Activated CD4-positive, alpha-beta T cell treated with anti-CD3 and anti-CD28 coated beads for 36 hours (primary cell): ENCODE measurements at regions of chr20 and their contacts with region 1.

Region 1: DNA sequence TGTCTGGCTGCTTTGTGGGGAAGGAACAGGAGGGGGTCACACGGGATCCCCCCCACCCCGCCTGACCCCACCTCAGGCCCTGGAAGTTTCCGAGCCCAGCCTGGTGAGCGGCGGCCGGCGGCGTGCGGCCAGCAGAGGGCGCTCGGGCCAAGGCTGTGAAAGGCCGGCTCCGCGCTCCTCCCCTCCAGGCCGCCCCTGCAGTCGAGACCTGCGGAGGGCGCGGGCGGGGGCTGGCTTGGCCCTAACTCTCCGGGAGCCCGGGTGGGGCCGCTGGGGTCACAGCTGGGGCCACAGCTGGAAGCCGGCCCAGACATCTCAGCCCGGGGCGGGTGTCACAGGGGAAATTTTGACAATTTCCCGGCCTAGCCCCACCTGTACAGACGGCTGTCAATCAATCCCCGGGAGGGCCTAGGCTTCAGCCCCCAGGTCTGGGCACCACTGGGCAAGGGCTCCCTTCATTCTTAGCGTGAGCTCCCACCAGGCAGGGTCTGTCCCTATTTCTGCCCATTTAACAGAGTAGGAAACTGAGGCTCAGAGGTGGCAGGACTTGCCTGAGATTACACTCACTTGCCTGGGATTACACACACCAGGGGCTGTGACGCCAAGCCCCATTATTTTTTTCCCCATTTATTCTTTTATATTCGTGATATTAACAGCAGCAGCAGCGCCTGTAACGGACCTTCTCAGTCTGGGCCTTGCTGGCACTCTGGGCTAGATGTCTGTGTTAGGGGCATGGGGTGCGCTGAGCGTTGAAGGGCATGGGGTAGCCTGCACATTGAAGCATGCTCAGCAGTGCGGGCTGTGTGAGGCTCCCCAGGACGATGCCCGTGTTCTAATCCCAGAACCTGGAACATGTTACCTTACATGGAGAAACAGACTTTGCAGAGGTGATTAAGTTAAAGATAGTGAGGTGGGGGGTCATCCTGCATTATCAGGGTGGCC is 23.0 kb downstream of the ZBP1 start:
- DNase-seq: peak; percentile 84
- ATAC-seq: peak; percentile 70
- H3K4me3 Mint-ChIP-seq: no peak overlapping the region
- H3K27ac Mint-ChIP-seq: no peak overlapping the region
- H3K4me1 Mint-ChIP-seq: peaks cover 2% of the 10 kb centered on the region
- H3K27me3 Mint-ChIP-seq: peaks cover 3% of the 10 kb centered on the region

Region 2: DNA sequence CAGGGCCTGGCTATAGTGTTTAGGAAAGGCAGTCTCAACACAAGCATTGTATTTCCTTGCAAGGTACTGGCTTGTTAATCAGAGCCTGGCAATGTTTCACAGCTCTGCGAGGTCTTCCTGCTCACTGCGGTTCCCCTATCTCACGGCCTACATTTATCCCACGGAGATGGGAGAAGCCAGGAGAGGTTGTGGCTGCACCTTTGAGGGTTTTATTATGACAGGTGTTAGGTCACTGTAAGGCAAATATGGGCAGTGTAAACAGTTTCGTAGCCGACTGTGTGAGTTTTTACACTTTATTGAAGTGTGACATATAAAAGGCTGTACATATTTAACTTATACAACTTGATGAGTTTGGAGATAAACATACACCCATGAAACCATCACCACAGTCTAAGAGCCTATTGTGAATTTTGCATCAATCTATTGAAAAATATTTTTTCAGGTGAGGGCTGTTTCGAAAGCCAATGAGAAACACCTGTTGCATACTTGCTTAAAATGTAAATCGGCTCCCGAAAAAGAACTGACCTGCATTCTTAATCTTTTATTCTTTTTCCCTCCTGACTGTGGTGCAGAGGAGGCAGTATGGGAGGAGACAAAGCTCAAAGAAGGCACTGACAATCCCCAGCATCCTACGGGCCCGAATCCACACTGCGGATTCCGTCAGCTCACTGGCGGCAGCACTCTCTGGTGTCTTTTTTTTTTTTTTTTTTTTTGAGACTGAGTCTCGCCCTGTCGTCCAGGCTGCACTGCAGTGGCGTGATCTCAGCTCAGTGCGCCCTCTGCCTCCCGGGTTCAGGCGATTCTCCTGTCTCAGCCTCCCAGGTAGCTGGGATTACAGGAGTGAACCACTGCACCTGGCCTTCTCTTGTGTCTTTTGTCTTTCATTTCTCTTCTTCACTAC is 213.6 kb before region 1 on chr20:
- CTCF ChIA-PET with region 1: interaction called, 6 read pairs
- POLR2A ChIA-PET with region 1: no interaction called
- intact Hi-C with region 1: loop called (anchors 1 to 2 kb)
- DNase-seq: no peak
- ATAC-seq: no peak
- H3K4me3 Mint-ChIP-seq: no peak overlapping the region
- H3K27ac Mint-ChIP-seq: no peak overlapping the region
- H3K4me1 Mint-ChIP-seq: peaks cover 21% of the 10 kb centered on the region
- H3K27me3 Mint-ChIP-seq: no peaks in the 10 kb centered on the region

Region 3: GRCh38 chr20:57514273-57514751 is 83.0 kb before region 1 on chr20:
- CTCF ChIA-PET with region 1: interaction called, 4 read pairs
- POLR2A ChIA-PET with region 1: no interaction called
- intact Hi-C with region 1: loop called (anchors 1 kb)
- DNase-seq: peak; percentile 56
- ATAC-seq: no peak
- H3K4me3 Mint-ChIP-seq: no peak overlapping the region
- H3K27ac Mint-ChIP-seq: no peak overlapping the region
- H3K4me1 Mint-ChIP-seq: no peaks in the 10 kb centered on the region
- H3K27me3 Mint-ChIP-seq: peaks cover 7% of the 10 kb centered on the region

Region 4: GRCh38 chr20:57622579-57623377 is 25.5 kb after region 1 on chr20:
- CTCF ChIA-PET with region 1: interaction called, 14 read pairs
- POLR2A ChIA-PET with region 1: no interaction called
- intact Hi-C with region 1: loop called in 1 of 2 experiments (anchors 1 kb)
- DNase-seq: peak; percentile 86
- ATAC-seq: peak; percentile 10
- H3K4me3 Mint-ChIP-seq: peak overlapping the region; percentile 36
- H3K27ac Mint-ChIP-seq: peak overlapping the region; percentile 19
- H3K4me1 Mint-ChIP-seq: peaks cover 64% of the 10 kb centered on the region
- H3K27me3 Mint-ChIP-seq: no peaks in the 10 kb centered on the region

Region 5: GRCh38 chr20:58087193-58087858 is 490.1 kb after region 1 on chr20:
- CTCF ChIA-PET with region 1: interaction called, 7 read pairs
- POLR2A ChIA-PET with region 1: no interaction called
- intact Hi-C with region 1: loop called in 1 of 2 experiments (anchors 1 kb)
- DNase-seq: peak; percentile 47
- ATAC-seq: no peak
- H3K4me3 Mint-ChIP-seq: no peak overlapping the region
- H3K27ac Mint-ChIP-seq: no peak overlapping the region
- H3K4me1 Mint-ChIP-seq: no peaks in the 10 kb centered on the region
- H3K27me3 Mint-ChIP-seq: peaks cover 10% of the 10 kb centered on the region

Region 6: GRCh38 chr20:58209652-58210397 is 612.6 kb after region 1 on chr20:
- CTCF ChIA-PET with region 1: interaction called, 7 read pairs
- POLR2A ChIA-PET with region 1: no interaction called
- intact Hi-C with region 1: loop called (anchors 1 kb)
- DNase-seq: peak; percentile 94
- ATAC-seq: peak; percentile 85
- H3K4me3 Mint-ChIP-seq: no peak overlapping the region
- H3K27ac Mint-ChIP-seq: peak overlapping the region; percentile 6
- H3K4me1 Mint-ChIP-seq: no peaks in the 10 kb centered on the region
- H3K27me3 Mint-ChIP-seq: peaks cover 10% of the 10 kb centered on the region